Endothelial cell of umbilical vein (primary cell): ENCODE measurements at regions of chrX and their contacts with region 1.

Region 1: GRCh38 chrX:115459883-115460880 is 100.8 kb upstream of the PLS3 start:
- DNase-seq: peak; percentile 84
- H3K4me3 ChIP-seq: no peak overlapping the region
- H3K27ac ChIP-seq: no peak overlapping the region
- H3K4me1 ChIP-seq: peaks cover 13% of the 10 kb centered on the region
- H3K27me3 ChIP-seq: no peaks in the 10 kb centered on the region
- CTCF ChIP-seq: no peak
- POLR2A ChIP-seq: no peak

Region 2: GRCh38 chrX:115448146-115448545 is 12.0 kb before region 1 on chrX:
- CTCF ChIA-PET with region 1: no interaction called
- POLR2A ChIA-PET with region 1: no interaction called
- dilution Hi-C with region 1: no loop called
- intact Hi-C with region 1: no loop called
- DNase-seq: no peak
- H3K4me3 ChIP-seq: no peak overlapping the region
- H3K27ac ChIP-seq: no peak overlapping the region
- H3K4me1 ChIP-seq: peaks cover 5% of the 10 kb centered on the region
- H3K27me3 ChIP-seq: no peaks in the 10 kb centered on the region
- CTCF ChIP-seq: no peak
- POLR2A ChIP-seq: no peak

Region 3: GRCh38 chrX:115533485-115533884 is 73.3 kb after region 1 on chrX:
- CTCF ChIA-PET with region 1: no interaction called
- POLR2A ChIA-PET with region 1: no interaction called
- dilution Hi-C with region 1: no loop called
- intact Hi-C with region 1: loop called (anchors 5 kb)
- DNase-seq: no peak
- H3K4me3 ChIP-seq: no peak overlapping the region
- H3K27ac ChIP-seq: no peak overlapping the region
- H3K4me1 ChIP-seq: peaks cover 32% of the 10 kb centered on the region
- H3K27me3 ChIP-seq: no peaks in the 10 kb centered on the region
- CTCF ChIP-seq: no peak
- POLR2A ChIP-seq: no peak

Region 4: GRCh38 chrX:115589419-115589818 is 129.2 kb after region 1 on chrX:
- CTCF ChIA-PET with region 1: no interaction called
- POLR2A ChIA-PET with region 1: no interaction called
- dilution Hi-C with region 1: no loop called
- intact Hi-C with region 1: no loop called
- DNase-seq: no peak
- H3K4me3 ChIP-seq: no peak overlapping the region
- H3K27ac ChIP-seq: no peak overlapping the region
- H3K4me1 ChIP-seq: peaks cover 26% of the 10 kb centered on the region
- H3K27me3 ChIP-seq: no peaks in the 10 kb centered on the region
- CTCF ChIP-seq: no peak
- POLR2A ChIP-seq: no peak